HAP-1 (cell line): ENCODE measurements at regions of chr3 and their contacts with region 1.

Region 1: DNA sequence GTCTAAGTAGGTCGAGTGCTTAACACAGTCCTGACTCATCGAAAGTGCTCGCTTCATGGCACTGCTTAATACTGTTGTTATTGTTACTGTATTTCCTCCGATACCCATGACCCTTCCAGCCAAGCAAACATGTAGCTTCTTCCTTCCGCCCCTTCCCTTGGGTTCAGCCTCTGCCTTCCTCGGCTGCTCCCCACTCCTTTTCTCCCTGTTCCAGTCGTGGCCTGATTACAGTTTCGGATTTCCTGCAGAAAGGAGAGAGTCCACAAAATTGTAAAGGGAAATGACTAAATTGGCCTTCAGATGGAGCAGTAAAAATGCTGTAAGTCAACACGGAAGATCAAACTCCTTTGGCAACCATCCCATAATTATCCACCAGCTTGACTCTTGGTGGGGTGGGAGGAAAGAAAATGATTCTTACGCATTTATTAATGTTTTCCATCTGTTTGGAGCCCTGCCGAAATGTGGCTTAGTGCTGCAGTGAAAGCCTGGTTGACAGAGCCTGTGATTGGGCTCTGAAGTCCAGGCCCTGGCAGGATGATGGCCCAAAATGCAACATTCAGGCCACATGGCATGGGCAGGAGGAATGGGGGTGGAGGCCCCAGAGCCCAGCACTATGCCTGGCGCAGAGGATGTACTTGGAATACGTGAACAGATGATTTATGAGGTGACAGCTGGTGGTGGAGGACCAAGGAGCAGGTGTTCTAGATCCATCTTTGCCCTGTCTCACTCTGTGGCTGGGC is 37.6 kb downstream of the FAM3D start:
- DNase-seq: no peak
- H3K4me3 ChIP-seq: no peak overlapping the region
- H3K4me1 ChIP-seq: no peaks in the 10 kb centered on the region; the same call in 1 of the 2 replicates
- H3K27me3 ChIP-seq: no peaks in the 10 kb centered on the region

Region 2: GRCh38 chr3:58573640-58574039 is 55.4 kb before region 1 on chr3:
- in situ Hi-C with region 1: loop called (anchors 5 kb)
- DNase-seq: no peak
- H3K4me3 ChIP-seq: no peak overlapping the region
- H3K4me1 ChIP-seq: no peaks in the 10 kb centered on the region
- H3K27me3 ChIP-seq: no peaks in the 10 kb centered on the region